ENCODE measurements at regions of chr2 and their contacts with region 1.

Region 1: GRCh38 chr2:134897932-134898331 is 20.7 kb upstream of the CCNT2 start:
- H3K4me3 Mint-ChIP-seq: no peak overlapping the region
- H3K27ac Mint-ChIP-seq: no peak overlapping the region
- H3K4me1 Mint-ChIP-seq: peaks cover under 1% of the 10 kb centered on the region
- H3K27me3 Mint-ChIP-seq: no peaks in the 10 kb centered on the region

Region 2: DNA sequence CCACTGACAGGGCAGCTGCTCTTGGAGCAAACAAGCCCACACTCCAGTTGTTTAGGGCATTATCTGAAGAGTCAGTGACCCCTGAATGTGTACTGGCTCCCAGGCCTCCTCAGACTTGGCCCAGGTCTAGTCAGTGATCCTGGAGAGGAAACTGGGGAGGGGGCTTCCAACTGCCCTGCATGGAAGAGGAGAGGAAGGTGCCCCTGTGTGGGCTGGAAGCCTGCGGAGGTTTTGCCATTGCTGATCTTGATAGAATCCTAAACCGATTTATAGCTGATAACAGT is 446.6 kb before region 1 on chr2:
- intact Hi-C with region 1: loop called (anchors 1 kb)
- H3K4me3 Mint-ChIP-seq: no peak overlapping the region
- H3K27ac Mint-ChIP-seq: no peak overlapping the region
- H3K4me1 Mint-ChIP-seq: no peaks in the 10 kb centered on the region
- H3K27me3 Mint-ChIP-seq: no peaks in the 10 kb centered on the region

Region 3: GRCh38 chr2:134660626-134661402 is 237.1 kb before region 1 on chr2:
- intact Hi-C with region 1: loop called (anchors 2 kb)
- H3K4me3 Mint-ChIP-seq: no peak overlapping the region
- H3K27ac Mint-ChIP-seq: no peak overlapping the region
- H3K4me1 Mint-ChIP-seq: no peaks in the 10 kb centered on the region
- H3K27me3 Mint-ChIP-seq: no peaks in the 10 kb centered on the region

Region 4: DNA sequence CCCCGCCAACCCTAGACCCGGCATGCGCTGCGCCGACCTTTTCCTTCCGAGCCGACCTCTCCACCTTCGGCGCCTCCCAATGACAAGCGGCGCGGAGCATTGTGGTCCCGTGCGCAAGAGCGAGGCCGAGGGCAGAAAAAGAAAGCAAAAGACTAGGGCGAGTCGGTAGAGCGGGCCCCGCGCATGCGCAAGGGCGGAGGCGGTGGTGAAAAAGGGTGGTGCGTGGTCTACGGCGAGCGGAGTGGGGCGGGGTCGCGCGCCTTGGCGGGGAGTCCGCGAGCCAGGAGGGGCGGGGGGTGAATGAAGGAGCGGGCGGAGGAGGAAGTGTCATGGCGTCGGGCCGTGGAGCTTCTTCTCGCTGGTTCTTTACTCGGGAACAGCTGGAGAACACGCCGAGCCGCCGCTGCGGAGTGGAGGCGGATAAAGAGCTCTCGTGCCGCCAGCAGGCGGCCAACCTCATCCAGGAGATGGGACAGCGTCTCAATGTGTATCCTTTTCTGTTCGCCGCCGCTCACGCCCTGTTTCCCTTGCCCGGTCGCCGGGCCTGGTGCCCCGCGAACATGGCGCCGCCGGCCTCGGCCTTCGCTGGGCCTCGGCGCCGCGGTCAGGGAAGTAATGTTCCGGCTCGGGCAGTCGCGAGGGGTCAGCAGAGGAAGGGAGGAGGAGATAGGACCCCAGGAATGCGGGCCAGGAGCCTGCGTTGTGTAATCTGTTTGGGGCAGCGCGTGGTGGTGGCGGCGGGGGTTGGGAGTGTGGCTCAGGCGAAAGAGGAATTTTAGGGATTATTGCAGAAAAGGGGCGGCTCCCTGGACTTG is 20.8 kb after region 1 on chr2 and contains the start of gene CCNT2:
- intact Hi-C with region 1: no loop called
- H3K4me3 Mint-ChIP-seq: peak within 1 kb of the TSS; percentile 98
- H3K27ac Mint-ChIP-seq: peak within 1 kb of the TSS; percentile 99
- H3K4me1 Mint-ChIP-seq: peaks cover 18% of the 10 kb centered on the region
- H3K27me3 Mint-ChIP-seq: no peaks in the 10 kb centered on the region

Measured in dendritic cell treated with granulocyte-macrophage colony-stimulating factor and Interleukin-4, amounts not matched to agents 40 ng/mL and 50 ng/mL, for 4 days (primary cell).